ENCODE measurements at regions of chr13 and their contacts with region 1.

Region 1: DNA sequence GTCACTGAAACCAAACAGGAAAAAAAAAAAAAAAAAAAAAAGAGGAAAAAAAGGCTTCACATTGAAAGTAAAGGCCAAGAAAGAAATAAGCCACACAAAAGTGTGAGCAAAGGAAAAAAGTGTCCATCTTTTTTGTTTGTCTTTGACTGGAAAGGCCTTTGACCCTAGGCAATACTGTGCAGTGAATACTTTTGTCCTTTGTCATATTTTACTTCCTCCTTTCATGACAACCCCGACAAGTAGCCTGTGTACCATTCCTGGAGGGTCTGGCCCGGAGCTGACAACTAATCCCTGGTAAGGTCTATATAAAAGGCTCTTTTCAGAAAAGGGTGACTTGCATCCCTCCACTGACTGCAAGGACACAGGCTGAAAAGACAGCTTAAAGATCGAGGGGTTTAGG is 12.9 kb upstream of the MICU2 start:
- DNase-seq: no peak
- ATAC-seq: no peak
- H3K4me3 ChIP-seq: no peak overlapping the region
- H3K27ac ChIP-seq: no peak overlapping the region
- H3K4me1 ChIP-seq: no peaks in the 10 kb centered on the region
- H3K27me3 ChIP-seq: no peaks in the 10 kb centered on the region
- CTCF ChIP-seq: no peak
- POLR2A ChIP-seq: no peak

Region 2: DNA sequence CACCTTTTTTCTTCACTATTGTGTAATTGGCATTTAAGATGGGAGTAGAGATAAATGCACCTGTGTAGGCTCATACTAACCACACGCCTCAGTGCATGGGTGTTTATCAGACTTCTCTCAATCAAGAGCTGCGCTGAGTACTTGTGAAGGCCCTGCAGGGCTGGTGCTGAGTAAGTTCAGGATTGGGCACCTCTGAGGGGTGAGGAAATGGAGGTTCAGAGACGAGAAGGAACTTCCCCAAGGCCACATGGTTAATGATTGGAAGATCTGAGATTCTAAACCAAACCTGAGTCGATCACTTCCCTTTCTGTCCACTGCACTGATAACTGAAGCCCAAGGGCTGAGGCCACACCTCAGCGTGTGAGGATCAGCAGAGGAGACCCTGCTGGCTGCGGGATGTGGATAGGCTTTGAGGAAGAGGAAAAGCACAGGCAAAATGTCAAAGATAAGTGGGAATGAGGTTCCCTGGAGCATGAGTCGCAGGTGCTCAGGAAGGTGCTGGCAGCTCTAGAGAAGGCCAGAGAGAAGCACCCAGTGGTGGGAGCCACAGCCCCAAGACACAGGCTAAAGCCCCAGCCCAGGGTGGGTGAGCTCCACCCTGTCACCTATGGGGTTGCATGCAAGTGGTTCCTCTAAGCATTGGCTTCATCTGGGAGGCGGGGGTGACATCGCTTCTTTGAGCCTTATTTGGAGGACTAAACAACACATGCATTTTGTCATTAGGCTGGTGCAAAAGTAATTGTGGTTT is 1352.4 kb before region 1 on chr13:
- in situ Hi-C with region 1: no loop called
- intact Hi-C with region 1: loop called (anchors 10 kb)
- DNase-seq: no peak
- ATAC-seq: no peak
- H3K4me3 ChIP-seq: no peak overlapping the region
- H3K27ac ChIP-seq: no peak overlapping the region
- H3K4me1 ChIP-seq: no peaks in the 10 kb centered on the region
- H3K27me3 ChIP-seq: peaks cover 0 to 2% (median 0%) of the 10 kb centered on the region in 3 donors
- CTCF ChIP-seq: no peak
- POLR2A ChIP-seq: no peak

Measured in gastrocnemius medialis (tissue), 4 donors.